Endothelial cell of umbilical vein (primary cell): ENCODE measurements at regions of chr3 and their contacts with region 1.

Region 1: GRCh38 chr3:182683453-182683852 is 109.9 kb upstream of the ATP11B start:
- DNase-seq: peak; percentile 84
- H3K4me3 ChIP-seq: peak overlapping the region in 1 of 3 experiments; percentile 80
- H3K27ac ChIP-seq: no peak overlapping the region
- H3K4me1 ChIP-seq: peaks cover 10% of the 10 kb centered on the region
- H3K27me3 ChIP-seq: peaks cover 0 to 6% of the 10 kb centered on the region in 2 experiments
- CTCF ChIP-seq: peak; percentile 76 to 91
- POLR2A ChIP-seq: no peak

Region 2: GRCh38 chr3:181210275-181210674 is 1473.2 kb before region 1 on chr3:
- CTCF ChIA-PET with region 1: interaction called, 58 read pairs
- POLR2A ChIA-PET with region 1: no interaction called
- dilution Hi-C with region 1: no loop called
- intact Hi-C with region 1: loop called (anchors 1 kb)
- DNase-seq: peak; percentile 27
- H3K4me3 ChIP-seq: no peak overlapping the region
- H3K27ac ChIP-seq: no peak overlapping the region
- H3K4me1 ChIP-seq: no peaks in the 10 kb centered on the region
- H3K27me3 ChIP-seq: peaks cover 1 to 3% of the 10 kb centered on the region in 2 experiments
- CTCF ChIP-seq: peak; percentile 5 to 20
- POLR2A ChIP-seq: no peak

Region 3: GRCh38 chr3:181567311-181568075 is 1116.0 kb before region 1 on chr3:
- CTCF ChIA-PET with region 1: interaction called, 10 read pairs
- POLR2A ChIA-PET with region 1: no interaction called
- dilution Hi-C with region 1: no loop called
- intact Hi-C with region 1: loop called (anchors 1 kb)
- DNase-seq: no peak
- H3K4me3 ChIP-seq: no peak overlapping the region
- H3K27ac ChIP-seq: no peak overlapping the region
- H3K4me1 ChIP-seq: peaks cover 3% of the 10 kb centered on the region
- H3K27me3 ChIP-seq: no peaks in the 10 kb centered on the region
- CTCF ChIP-seq: no peak
- POLR2A ChIP-seq: no peak

Region 4: DNA sequence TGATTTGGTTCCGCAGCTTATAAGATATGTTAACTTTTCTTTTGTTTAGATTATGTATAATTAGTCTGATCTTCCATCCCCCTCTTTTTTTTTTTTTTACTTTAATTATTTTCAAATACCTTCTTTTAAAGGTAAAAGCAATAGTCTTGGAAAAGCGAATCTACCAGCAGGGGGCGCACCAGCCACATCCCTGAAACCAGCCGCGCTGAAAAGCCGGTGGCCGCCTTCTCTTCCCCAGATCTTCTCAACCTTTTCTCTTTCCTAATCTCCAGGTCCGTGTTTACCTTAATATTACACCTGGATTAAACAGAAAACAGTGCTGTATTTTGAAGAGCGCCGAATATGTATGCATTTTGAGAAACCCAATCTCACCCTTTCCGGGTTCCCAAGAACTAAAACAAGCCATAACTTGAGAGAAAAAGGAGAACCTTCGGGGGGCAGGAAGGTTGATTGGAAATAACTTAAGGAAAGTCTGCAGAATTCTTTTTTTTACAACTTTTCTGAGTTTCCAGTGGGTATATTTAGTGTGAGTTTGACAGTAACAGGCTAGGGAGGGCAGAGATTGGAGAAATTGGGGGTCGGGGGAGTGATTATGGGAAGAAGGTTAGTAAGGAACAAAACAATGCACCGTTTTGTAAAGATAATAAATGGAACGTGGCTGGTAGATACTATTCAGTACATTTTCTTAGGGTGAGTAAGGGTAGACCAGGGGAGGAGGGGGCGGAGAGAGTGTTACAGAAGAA is 973.7 kb before region 1 on chr3:
- CTCF ChIA-PET with region 1: interaction called, 48 read pairs
- POLR2A ChIA-PET with region 1: no interaction called
- dilution Hi-C with region 1: no loop called
- intact Hi-C with region 1: loop called (anchors 1 kb)
- DNase-seq: peak; percentile 62
- H3K4me3 ChIP-seq: no peak overlapping the region
- H3K27ac ChIP-seq: no peak overlapping the region
- H3K4me1 ChIP-seq: no peaks in the 10 kb centered on the region
- H3K27me3 ChIP-seq: peaks cover 9% of the 10 kb centered on the region in 2 experiments
- CTCF ChIP-seq: peak; percentile 59 to 66
- POLR2A ChIP-seq: no peak

Region 5: GRCh38 chr3:182248351-182248880 is 435.0 kb before region 1 on chr3:
- CTCF ChIA-PET with region 1: no interaction called
- POLR2A ChIA-PET with region 1: no interaction called
- dilution Hi-C with region 1: no loop called
- intact Hi-C with region 1: loop called (anchors 1 kb)
- DNase-seq: no peak
- H3K4me3 ChIP-seq: no peak overlapping the region
- H3K27ac ChIP-seq: no peak overlapping the region
- H3K4me1 ChIP-seq: no peaks in the 10 kb centered on the region
- H3K27me3 ChIP-seq: no peaks in the 10 kb centered on the region
- CTCF ChIP-seq: no peak
- POLR2A ChIP-seq: no peak

Region 6: DNA sequence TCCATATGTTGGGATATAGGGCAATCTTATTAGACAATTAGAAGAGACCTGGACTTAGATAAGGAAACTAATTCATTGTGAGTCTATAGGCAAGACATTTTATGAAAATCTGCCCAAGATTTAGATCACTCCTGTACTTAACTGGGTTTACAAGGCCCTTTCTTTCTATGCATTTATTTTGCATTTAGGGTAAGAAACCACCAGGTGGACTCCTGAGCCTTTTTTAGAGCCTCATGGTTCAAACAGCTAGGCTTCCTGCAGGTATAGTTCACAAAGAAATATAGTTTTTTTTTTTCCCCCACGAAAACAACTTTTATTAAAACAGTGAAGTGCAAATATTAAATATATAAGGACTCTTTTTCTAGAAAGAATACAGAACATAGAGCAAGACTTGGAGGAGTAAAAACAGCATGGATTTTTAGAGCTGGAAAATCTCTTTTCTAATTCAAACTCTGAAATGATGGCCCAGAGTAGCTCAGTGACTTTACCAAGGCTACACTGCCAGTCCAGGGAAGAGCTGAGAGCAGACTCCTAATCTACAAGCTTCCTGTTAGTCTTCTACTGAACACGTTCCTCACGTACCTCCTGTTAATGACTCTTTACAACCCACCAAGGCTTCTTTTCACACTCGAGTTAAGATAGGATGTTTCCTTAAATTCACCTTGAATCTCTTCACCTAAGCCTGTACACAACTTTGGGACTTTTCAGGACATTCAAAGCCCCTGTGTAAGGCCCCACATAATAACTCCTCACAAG is 291.1 kb before region 1 on chr3:
- CTCF ChIA-PET with region 1: no interaction called
- POLR2A ChIA-PET with region 1: no interaction called
- dilution Hi-C with region 1: no loop called
- intact Hi-C with region 1: loop called (anchors 10 kb)
- DNase-seq: no peak
- H3K4me3 ChIP-seq: no peak overlapping the region
- H3K27ac ChIP-seq: no peak overlapping the region
- H3K4me1 ChIP-seq: no peaks in the 10 kb centered on the region
- H3K27me3 ChIP-seq: no peaks in the 10 kb centered on the region
- CTCF ChIP-seq: no peak
- POLR2A ChIP-seq: no peak

Region 7: GRCh38 chr3:182668541-182668940 is 14.9 kb before region 1 on chr3:
- CTCF ChIA-PET with region 1: no interaction called
- POLR2A ChIA-PET with region 1: no interaction called
- dilution Hi-C with region 1: no loop called
- intact Hi-C with region 1: no loop called
- DNase-seq: no peak
- H3K4me3 ChIP-seq: no peak overlapping the region
- H3K27ac ChIP-seq: no peak overlapping the region
- H3K4me1 ChIP-seq: no peaks in the 10 kb centered on the region
- H3K27me3 ChIP-seq: peaks cover 4 to 5% of the 10 kb centered on the region in 2 experiments
- CTCF ChIP-seq: no peak
- POLR2A ChIP-seq: no peak

Region 8: GRCh38 chr3:182693723-182694122 is 10.3 kb after region 1 on chr3:
- CTCF ChIA-PET with region 1: interaction called, 10 read pairs
- POLR2A ChIA-PET with region 1: no interaction called
- dilution Hi-C with region 1: no loop called
- intact Hi-C with region 1: no loop called
- DNase-seq: no peak
- H3K4me3 ChIP-seq: no peak overlapping the region
- H3K27ac ChIP-seq: no peak overlapping the region
- H3K4me1 ChIP-seq: no peaks in the 10 kb centered on the region
- H3K27me3 ChIP-seq: peaks cover 0 to 10% of the 10 kb centered on the region in 2 experiments
- CTCF ChIP-seq: no peak
- POLR2A ChIP-seq: no peak